ENCODE measurements at regions of chr6 and their contacts with region 1.

Region 1: DNA sequence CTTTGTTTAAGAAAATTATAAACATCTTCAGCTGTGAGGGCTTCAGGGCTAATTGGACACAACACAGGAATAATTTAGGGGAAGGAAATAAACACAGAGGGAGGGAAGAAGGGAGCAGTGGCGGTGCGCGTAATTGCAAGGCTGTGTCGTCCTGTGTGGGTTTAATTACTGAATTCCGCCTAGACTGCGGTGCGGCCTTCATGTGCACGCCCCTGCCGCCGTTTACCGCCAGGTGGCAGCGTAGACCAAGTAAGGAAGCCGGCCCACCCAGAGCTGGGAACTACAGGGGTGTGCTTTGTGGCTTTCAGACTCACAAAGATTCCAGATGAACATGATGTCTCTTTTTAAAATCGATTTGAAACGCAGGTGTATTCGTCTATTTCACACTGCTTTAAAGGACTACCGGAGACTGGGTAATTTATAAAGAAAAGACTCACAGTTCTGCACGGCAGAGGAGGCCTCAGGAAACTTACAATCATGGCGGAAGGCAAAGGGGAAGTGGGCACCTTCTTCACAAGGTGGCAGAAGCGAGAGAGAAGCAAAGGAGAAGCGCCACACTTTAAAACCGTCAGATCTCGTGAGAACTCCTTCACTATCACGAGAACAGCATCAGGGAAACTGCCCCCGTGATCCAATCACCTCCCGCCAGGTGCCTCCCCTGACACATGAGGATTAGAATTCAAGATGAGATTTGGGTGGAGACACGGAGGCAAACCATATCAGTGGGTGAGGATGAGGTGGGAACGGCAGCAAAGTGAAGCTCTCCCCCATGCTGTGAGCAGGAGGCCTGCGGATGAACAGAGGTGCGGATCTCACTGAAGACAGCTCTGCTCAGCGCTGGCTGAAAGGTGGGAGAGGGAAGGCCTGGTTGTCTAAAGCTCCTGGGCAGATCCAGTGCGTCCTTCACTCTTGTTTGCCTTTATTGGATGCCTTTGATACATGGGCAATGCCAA is 222.0 kb upstream of the PDE10A start:
- DNase-seq: peak; percentile 81
- H3K4me3 ChIP-seq: no peak overlapping the region
- H3K27ac ChIP-seq: no peak overlapping the region
- H3K4me1 ChIP-seq: no peaks in the 10 kb centered on the region
- H3K27me3 ChIP-seq: peaks cover 19% of the 10 kb centered on the region
- CTCF ChIP-seq: peak; percentile 97

Region 2: GRCh38 chr6:165417278-165417865 is 467.7 kb before region 1 on chr6:
- intact Hi-C with region 1: no loop called
- DNase-seq: no peak
- H3K4me3 ChIP-seq: no peak overlapping the region
- H3K27ac ChIP-seq: no peak overlapping the region
- H3K4me1 ChIP-seq: no peaks in the 10 kb centered on the region
- H3K27me3 ChIP-seq: no peaks in the 10 kb centered on the region
- CTCF ChIP-seq: no peak

Region 3: GRCh38 chr6:166106076-166106686 is 221.1 kb after region 1 on chr6:
- intact Hi-C with region 1: loop called (anchors 2 kb)
- DNase-seq: peak; percentile 74
- H3K4me3 ChIP-seq: no peak overlapping the region
- H3K27ac ChIP-seq: no peak overlapping the region
- H3K4me1 ChIP-seq: no peaks in the 10 kb centered on the region
- H3K27me3 ChIP-seq: peaks cover 55% of the 10 kb centered on the region
- CTCF ChIP-seq: peak; percentile 92